ENCODE measurements at regions of chr3 and their contacts with region 1.

Region 1: DNA sequence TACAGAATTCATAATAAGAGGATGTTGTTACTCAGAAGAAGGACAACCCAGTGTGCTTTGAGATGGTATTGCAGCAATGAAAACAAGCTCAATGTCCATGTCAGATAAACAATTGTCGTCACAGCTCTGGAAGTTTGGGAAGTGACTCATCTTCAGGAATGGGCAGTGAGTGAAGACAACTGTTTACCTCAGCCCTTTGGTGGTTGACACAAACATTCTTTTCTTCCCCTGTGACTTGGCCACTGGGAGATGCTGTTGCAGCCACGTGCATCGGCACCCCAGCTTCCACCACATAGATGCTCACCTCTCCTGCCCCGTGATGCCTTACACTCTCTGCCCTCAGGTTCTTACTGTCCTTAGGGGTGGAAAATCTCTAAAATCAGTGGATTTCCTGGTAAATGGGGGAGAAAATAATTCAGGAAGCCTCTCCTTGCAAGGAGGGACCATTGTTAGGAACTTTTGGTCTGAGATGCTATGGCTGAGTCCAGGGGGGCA is 114.1 kb upstream of the GALNT15 start:
- DNase-seq: peak; percentile 96 to 98
- ATAC-seq: peak; percentile 92
- H3K4me3 ChIP-seq: no peak overlapping the region
- H3K27ac ChIP-seq: peak overlapping the region; percentile 84 to 90
- H3K4me1 ChIP-seq: peaks cover 55% of the 10 kb centered on the region
- CTCF ChIP-seq: peak; percentile 24; the same call in 1 of the 3 replicates
- EP300 ChIP-seq: peak; percentile 92
- POLR2A ChIP-seq: no peak
- RAD21 ChIP-seq: peak; percentile 55 to 60

Region 2: DNA sequence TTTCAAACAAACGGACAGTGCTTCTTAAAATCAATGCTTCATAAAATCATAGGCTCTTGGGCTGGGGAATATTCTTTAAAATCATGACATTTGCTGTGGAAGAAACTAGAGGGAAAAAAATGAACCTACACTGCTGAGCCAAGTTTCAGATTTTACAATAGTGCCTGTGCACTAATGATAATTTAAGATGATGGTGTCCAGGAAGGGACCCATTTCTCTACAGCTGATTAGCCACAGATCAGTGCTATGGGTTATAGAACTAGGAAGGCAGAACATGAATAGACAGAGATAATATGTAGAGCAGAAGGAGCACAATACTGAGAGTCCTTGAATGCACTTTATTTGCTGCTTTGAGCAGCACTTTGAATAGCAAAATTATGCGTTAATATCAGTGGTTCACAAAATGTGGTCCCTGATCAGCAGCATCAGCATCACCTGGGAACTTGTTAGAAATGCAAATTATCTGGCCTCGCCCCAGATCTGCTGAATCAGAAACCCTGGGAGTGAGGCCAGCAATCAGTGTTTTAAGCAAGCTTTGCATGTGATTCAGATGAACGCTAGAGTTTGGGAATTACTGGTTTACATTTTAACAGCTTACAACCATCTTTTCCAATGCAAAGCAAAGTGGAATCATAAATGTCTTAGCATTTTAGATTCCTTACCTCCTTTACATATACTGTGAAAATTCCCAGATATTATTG is 126.8 kb before region 1 on chr3:
- CTCF ChIA-PET with region 1: no interaction called
- POLR2A ChIA-PET with region 1: no interaction called
- DNase-seq: no peak
- ATAC-seq: no peak
- H3K4me3 ChIP-seq: no peak overlapping the region
- H3K27ac ChIP-seq: no peak overlapping the region
- H3K4me1 ChIP-seq: no peaks in the 10 kb centered on the region
- CTCF ChIP-seq: no peak
- EP300 ChIP-seq: no peak
- POLR2A ChIP-seq: no peak
- RAD21 ChIP-seq: no peak

Region 3: GRCh38 chr3:16140116-16140893 is 79.9 kb after region 1 on chr3:
- CTCF ChIA-PET with region 1: interaction called, 15 read pairs
- POLR2A ChIA-PET with region 1: no interaction called
- DNase-seq: no peak
- ATAC-seq: no peak
- H3K4me3 ChIP-seq: no peak overlapping the region
- H3K27ac ChIP-seq: peak overlapping the region; percentile 15 to 53; a peak in 4 of 6 replicates
- H3K4me1 ChIP-seq: peaks cover 32% of the 10 kb centered on the region
- CTCF ChIP-seq: no peak
- EP300 ChIP-seq: no peak
- POLR2A ChIP-seq: no peak
- RAD21 ChIP-seq: no peak

Region 4: DNA sequence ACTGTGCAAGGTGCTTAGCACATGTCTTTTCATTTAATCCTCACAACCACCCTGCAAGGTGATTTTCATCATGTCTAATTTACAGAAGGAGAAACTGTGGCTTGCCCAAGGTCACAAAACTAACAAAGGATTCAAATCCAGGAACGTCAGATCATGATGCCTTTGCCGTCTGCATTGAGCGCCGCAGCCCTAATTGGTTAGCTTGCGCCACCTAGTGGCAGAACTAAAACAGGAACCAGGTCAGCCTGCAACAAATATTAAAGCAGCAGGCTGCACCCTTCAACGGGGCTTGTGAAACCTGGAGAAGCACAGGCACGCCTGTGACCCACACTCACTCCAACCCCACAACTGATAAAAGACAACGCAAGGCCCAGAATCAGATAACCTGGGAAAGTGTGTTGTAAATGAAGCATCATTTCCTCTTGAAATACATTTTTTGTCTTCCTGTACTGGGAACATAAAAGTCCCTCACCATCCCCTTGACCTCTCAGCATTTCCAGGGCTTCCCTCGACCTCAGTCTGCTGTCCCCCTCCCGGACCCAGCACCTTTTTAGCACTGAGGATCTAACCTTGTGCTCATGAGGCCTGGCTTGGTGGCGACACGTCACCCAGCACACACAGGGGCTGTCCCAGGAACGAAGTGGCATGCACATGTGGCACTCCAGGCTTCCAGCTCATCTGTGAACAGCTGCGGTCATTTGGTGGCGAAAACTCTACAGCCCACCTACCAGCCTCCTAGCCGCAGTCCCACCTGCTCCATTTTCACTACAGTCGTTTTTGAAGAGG is 187.1 kb after region 1 on chr3:
- CTCF ChIA-PET with region 1: interaction called, 15 read pairs
- POLR2A ChIA-PET with region 1: interaction called, 3 read pairs
- DNase-seq: peak; percentile 68 to 81
- ATAC-seq: peak; percentile 85 to 94
- H3K4me3 ChIP-seq: no peak overlapping the region
- H3K27ac ChIP-seq: peak overlapping the region; percentile 46 to 58; a peak in 4 of 6 replicates
- H3K4me1 ChIP-seq: peaks cover 6% of the 10 kb centered on the region
- CTCF ChIP-seq: peak; percentile 93
- EP300 ChIP-seq: no peak
- POLR2A ChIP-seq: no peak
- RAD21 ChIP-seq: peak; percentile 96 to 97

Measured in A549 (cell line).